Activated T-helper 2 cell treated with anti-CD3 and anti-CD28 coated beads, Interferon-gamma antibody, Interleukin-2, Interleukin-4, amounts not matched to agents 10 μg/mL and 5 μg/mL and 100 μg/mL, durations not matched to agents 14 hours and 24 hours and 36 hours (primary cell): ENCODE measurements at regions of chr12 and their contacts with region 1.

Region 1: GRCh38 chr12:12032851-12033588 is 37.7 kb upstream of the BCL2L14 start:
- DNase-seq: peak; percentile 49
- H3K4me3 Mint-ChIP-seq: peak overlapping the region; percentile 65
- H3K27ac Mint-ChIP-seq: peak overlapping the region; percentile 79
- H3K4me1 Mint-ChIP-seq: peaks cover 31% of the 10 kb centered on the region
- H3K27me3 Mint-ChIP-seq: peaks cover 8% of the 10 kb centered on the region

Region 2: GRCh38 chr12:11581179-11581755 is 451.8 kb before region 1 on chr12:
- intact Hi-C with region 1: loop called (anchors 1 kb)
- DNase-seq: peak; percentile 32
- H3K4me3 Mint-ChIP-seq: no peak overlapping the region
- H3K27ac Mint-ChIP-seq: no peak overlapping the region
- H3K4me1 Mint-ChIP-seq: peaks cover 14% of the 10 kb centered on the region
- H3K27me3 Mint-ChIP-seq: peaks cover 38% of the 10 kb centered on the region

Region 3: DNA sequence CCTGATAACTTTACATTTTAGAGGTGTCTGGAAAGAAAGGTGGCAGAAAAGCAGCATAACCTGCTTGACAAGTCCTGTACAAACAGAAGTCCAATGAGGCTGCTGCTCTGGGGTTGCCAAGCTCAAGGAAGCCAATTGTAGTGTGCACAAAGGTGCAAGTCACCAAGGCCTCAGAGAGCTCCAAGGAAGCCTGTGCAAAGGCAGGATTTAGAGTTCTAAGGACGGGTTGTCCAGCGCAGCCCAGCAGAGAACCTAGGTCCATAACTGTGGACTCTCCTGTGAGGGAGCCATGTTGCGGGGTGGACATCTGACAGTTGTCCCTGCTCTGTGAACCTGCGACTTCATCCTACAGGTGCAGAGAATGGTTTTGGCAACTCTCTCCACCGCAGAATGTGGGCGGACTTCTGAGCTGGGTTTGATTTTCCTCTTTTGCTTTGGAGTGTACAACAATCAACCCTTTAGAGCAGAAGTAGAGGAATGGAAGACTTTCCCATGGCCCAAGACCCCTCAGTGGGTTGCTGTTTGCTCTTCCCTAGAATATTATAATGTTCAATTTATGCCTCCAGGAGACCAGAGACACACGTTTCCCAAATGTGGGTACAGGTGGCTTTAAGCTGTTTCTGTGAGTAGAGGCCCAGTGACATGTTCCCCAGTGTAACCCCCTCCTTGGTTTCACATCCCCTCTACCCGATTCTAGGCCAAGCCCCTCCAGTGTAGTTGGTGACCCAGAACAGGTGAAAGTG is 302.6 kb before region 1 on chr12:
- intact Hi-C with region 1: loop called (anchors 5 kb)
- DNase-seq: no peak
- H3K4me3 Mint-ChIP-seq: peak overlapping the region; percentile 28
- H3K27ac Mint-ChIP-seq: peak overlapping the region; percentile 78
- H3K4me1 Mint-ChIP-seq: peaks cover 75% of the 10 kb centered on the region
- H3K27me3 Mint-ChIP-seq: no peaks in the 10 kb centered on the region

Region 4: DNA sequence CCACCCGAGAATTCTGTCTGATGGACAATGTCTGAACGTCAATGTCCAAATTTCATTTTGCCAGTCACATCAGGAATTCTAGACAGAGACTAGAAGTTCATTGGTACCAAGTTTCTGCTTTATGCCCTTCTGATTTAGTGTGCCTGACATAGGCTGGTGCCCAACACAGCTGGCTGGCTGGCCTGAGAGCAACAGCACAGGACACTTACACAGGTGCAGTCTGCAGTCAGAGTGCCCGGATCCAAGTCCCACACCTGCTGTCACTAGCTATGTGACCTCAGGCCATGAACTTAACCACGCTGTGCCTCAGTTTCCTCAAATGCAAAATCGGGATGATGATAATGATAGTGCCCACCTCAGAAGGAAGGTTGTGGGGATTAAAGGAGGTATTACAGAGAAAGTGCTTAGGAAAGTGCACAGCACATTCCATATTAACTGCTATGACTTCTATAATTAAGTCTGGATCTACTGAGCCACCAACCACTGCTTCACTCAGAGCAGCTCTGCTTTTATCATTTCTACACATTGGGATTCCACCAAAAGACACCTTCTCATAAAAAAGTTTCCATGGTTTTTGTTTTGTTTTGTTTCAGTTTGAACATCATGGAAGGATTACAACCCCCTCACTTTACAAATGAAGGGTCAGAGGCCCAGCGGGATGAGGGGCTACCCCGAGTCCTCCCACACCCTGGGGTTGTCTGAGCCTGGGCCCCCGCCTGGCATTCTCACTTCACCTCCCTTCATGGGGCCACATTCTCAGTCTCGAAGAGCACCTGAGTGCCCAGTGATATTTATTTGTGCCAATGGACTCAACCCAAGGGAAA is 131.1 kb before region 1 on chr12:
- intact Hi-C with region 1: loop called (anchors 5 kb)
- DNase-seq: no peak
- H3K4me3 Mint-ChIP-seq: no peak overlapping the region
- H3K27ac Mint-ChIP-seq: peak overlapping the region; percentile 85
- H3K4me1 Mint-ChIP-seq: peaks cover 59% of the 10 kb centered on the region
- H3K27me3 Mint-ChIP-seq: no peaks in the 10 kb centered on the region

Region 5: DNA sequence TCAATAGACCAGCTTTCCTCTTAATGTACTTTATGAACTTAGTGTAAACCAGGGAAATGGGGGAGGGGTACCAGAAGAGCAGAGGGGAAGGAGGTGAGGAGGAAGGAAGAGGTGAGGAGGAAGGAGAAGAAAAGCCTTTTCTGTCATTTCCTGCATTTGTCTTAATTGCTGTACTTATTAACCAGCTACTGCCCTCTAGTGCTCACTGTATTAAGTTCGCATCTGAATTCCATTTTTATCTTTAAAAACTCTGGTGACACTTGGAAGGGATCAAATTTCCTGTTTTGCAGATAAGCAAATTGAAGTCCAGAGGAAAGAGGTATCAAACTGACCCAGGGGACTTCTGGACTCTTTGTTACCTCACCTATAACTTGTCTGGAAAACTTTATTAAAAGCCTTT is 294.8 kb after region 1 on chr12:
- intact Hi-C with region 1: loop called (anchors 1 kb)
- DNase-seq: no peak
- H3K4me3 Mint-ChIP-seq: no peak overlapping the region
- H3K27ac Mint-ChIP-seq: no peak overlapping the region
- H3K4me1 Mint-ChIP-seq: peaks cover 18% of the 10 kb centered on the region
- H3K27me3 Mint-ChIP-seq: peaks cover 12% of the 10 kb centered on the region